H1 (cell line): ENCODE measurements at regions of chr3 and their contacts with region 1.

Region 1: DNA sequence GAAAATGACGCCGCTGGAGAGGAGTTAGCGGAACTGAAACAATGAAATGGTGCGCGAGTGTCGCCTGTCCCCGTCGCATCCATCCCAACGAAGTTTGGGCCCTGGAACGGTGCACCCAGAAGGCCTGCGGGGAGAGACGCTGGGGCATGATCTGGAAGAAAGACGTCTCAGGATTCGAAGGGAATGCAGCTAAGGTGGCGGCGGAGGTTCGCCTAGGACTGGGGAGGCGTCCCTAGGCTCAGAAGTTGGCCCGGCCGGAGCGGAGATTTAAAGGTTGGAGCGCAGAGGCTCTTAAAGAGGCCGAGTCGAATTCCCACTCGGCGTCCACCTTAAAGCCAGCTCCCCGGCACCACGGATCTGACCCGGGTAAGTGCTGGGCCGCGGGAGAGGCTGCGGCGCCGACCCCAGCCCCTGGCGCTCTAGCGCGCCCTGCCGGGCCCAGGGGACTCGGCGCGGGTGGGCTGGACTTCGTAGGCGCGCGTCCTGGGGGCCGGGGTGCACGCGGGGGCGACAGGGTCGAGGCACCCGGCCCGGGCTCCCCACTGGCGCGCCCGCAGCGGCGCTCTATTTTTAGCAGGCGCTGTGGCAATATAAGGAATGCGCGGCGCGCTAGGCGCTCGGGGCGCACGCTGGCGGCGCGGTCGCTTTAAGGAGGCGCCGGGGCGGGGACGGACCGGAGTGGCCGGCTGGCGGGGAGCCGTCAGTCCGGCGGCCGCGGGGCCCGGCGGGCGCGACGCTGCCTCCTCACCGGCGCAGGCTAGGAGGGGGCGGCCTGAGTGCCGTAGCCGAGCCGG is at the start of gene MRAS:
- DNase-seq: peak; percentile 46 to 85
- H3K4me3 ChIP-seq: peak within 1 kb of the TSS; percentile 54 to 87 (median 61)
- H3K27ac ChIP-seq: no peak within 1 kb of the TSS; the same call in 1 of the 2 replicates
- H3K4me1 ChIP-seq: peaks cover 0 to 10% (median 4%) of the 10 kb centered on the region in 4 experiments; a peak in 3 of 7 replicates
- H3K27me3 ChIP-seq: peaks cover 0 to 13% (median 4%) of the 10 kb centered on the region in 4 experiments; a peak in 3 of 7 replicates
- CTCF ChIP-seq: peak; percentile 44 to 65 (median 50)
- EP300 ChIP-seq: no peak
- POLR2A ChIP-seq: peak in 1 of 2 experiments; percentile 49; a peak in 2 of 3 replicates
- RAD21 ChIP-seq: peak; percentile 49 to 66
- total RNA-seq, gene MRAS: 15.6 and 16.2 TPM in 2 replicates

Region 2: GRCh38 chr3:138213398-138214085 is 134.6 kb before region 1 on chr3:
- CTCF ChIA-PET with region 1: no interaction called
- POLR2A ChIA-PET with region 1: no interaction called
- DNase-seq: no peak
- H3K4me3 ChIP-seq: no peak overlapping the region
- H3K27ac ChIP-seq: no peak overlapping the region
- H3K4me1 ChIP-seq: peaks cover 0 to 5% (median 2%) of the 10 kb centered on the region in 4 experiments; a peak in 2 of 7 replicates
- H3K27me3 ChIP-seq: no peaks in the 10 kb centered on the region
- CTCF ChIP-seq: no peak
- EP300 ChIP-seq: no peak
- POLR2A ChIP-seq: no peak
- RAD21 ChIP-seq: no peak

Region 3: GRCh38 chr3:138384991-138385390 is 36.8 kb after region 1 on chr3:
- CTCF ChIA-PET with region 1: interaction called, 11 read pairs
- POLR2A ChIA-PET with region 1: no interaction called
- DNase-seq: no peak
- H3K4me3 ChIP-seq: no peak overlapping the region
- H3K27ac ChIP-seq: no peak overlapping the region
- H3K4me1 ChIP-seq: peaks cover 0 to 2% (median under 1%) of the 10 kb centered on the region in 4 experiments; a peak in 1 of 7 replicates
- H3K27me3 ChIP-seq: no peaks in the 10 kb centered on the region
- CTCF ChIP-seq: no peak
- EP300 ChIP-seq: no peak
- POLR2A ChIP-seq: no peak
- RAD21 ChIP-seq: no peak

Region 4: DNA sequence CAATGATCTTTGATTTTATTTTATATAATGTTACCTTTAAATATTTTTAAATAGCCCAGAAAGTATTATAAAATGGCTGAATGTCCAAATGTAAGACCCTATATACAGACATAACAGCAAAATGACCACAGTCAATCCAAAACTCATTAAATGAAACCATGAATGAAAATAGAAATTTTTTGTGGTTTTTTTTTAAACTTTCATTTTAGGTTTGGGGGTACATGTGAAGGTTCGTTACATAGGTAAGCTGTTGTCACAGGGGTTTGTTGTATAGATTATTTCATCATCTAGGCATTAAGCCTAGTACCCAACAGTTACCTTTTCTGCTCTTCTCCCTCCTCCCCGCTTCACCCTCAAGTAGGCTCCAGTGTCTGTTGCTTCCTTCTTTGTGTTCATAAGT is 369.2 kb after region 1 on chr3:
- CTCF ChIA-PET with region 1: no interaction called
- POLR2A ChIA-PET with region 1: no interaction called
- DNase-seq: no peak
- H3K4me3 ChIP-seq: no peak overlapping the region
- H3K27ac ChIP-seq: no peak overlapping the region
- H3K4me1 ChIP-seq: no peaks in the 10 kb centered on the region
- H3K27me3 ChIP-seq: no peaks in the 10 kb centered on the region
- CTCF ChIP-seq: no peak
- EP300 ChIP-seq: no peak
- POLR2A ChIP-seq: no peak
- RAD21 ChIP-seq: no peak